Panc1 (cell line): ENCODE measurements at regions of chr12 and their contacts with region 1.

Region 1: DNA sequence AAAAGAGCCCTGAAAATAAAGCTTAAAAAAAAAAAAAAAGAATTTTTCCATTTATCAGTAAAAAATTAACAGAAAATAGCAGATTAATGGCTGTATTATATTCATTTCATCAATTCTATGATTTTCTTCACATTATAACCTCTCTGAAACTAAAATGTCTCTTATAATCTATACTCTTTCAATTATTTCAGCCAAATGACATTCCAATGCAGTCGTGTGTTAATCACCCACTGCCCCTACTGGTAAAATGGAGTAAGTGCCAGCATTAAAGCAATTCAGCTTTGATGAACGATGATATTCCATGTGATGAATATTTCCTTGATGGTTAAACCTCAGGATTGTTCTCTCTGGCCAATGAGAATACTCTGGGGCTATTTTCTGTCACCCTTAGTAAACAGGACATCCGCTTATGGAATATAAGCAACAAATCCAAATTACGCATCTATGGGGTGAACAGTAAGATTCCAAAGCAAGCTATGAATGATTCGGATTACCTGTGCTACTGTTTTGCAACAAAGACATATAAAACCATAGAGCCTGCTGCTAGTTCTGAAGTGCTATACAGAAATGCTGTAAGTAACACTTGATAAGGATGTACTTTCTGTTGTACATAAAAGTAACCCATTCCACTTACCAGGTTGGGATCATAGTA is 20.3 kb upstream of the SYCP3 start:
- DNase-seq: no peak
- ATAC-seq: peak; percentile 79
- H3K4me3 ChIP-seq: no peak overlapping the region
- H3K27ac ChIP-seq: no peak overlapping the region
- H3K4me1 ChIP-seq: no peaks in the 10 kb centered on the region
- H3K27me3 ChIP-seq: no peaks in the 10 kb centered on the region
- CTCF ChIP-seq: peak; percentile 84

Region 2: GRCh38 chr12:101414533-101415119 is 344.9 kb before region 1 on chr12:
- CTCF ChIA-PET with region 1: no interaction called
- POLR2A ChIA-PET with region 1: no interaction called
- in situ Hi-C with region 1: no loop called
- intact Hi-C with region 1: loop called (anchors 5 kb)
- DNase-seq: peak; percentile 68
- ATAC-seq: peak; percentile 82
- H3K4me3 ChIP-seq: no peak overlapping the region
- H3K27ac ChIP-seq: no peak overlapping the region
- H3K4me1 ChIP-seq: no peaks in the 10 kb centered on the region
- H3K27me3 ChIP-seq: no peaks in the 10 kb centered on the region; the same call in 1 of the 2 replicates
- CTCF ChIP-seq: peak; percentile 61; the same call in 1 of the 2 replicates

Region 3: DNA sequence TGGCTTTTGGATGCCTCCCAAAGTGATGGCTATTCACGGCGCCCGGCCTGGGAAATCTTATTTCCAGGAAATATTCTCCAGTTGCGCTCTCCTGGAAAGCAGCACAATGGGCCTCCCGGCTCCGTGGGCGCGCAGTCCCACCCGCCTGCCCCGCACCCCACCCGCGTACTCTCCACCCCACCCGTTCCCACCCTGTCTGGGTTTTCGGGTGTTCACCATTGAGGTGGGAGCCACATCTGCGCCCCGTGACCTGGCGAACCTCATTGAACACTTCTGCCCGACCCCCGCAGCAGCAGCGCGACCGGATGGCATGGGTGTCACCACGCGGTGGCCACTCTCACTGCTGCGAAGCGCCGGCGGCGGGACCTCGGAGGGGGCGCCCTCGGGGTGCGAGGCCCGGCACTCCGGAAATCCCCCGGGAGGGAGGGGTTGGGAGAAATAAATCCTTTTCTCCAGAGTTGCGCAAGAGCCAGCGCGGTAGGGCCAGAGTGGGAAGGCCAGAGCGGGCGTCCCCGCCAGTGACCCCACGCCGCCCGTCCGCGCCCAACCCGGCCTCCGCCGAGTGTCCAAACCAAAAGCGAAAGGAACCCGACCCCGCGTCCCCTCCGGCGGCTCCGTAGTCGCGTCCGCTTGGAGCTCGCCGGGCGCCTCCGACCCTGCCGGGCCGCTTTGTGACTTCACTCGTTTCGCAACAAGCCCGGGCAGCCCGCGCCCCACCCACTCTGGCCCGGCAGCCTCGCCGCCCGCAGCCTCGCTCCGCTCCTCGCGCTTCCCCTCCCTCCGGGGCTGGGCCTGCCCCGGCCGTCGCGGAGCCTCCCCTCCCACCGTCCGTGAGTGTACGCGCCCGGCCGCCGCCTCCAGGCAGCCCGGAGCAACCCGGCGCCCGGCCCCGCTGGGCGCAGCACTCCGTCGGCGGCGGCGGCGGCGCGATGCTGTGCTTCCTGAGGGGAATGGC is 117.6 kb after region 1 on chr12 and contains the start of gene DRAM1:
- CTCF ChIA-PET with region 1: no interaction called
- POLR2A ChIA-PET with region 1: interaction called, 14 read pairs
- in situ Hi-C with region 1: no loop called
- intact Hi-C with region 1: no loop called
- DNase-seq: no peak
- ATAC-seq: peak; percentile 96
- H3K4me3 ChIP-seq: peak within 1 kb of the TSS; percentile 79 to 93
- H3K27ac ChIP-seq: peak within 1 kb of the TSS; percentile 80
- H3K4me1 ChIP-seq: no peaks in the 10 kb centered on the region
- H3K27me3 ChIP-seq: no peaks in the 10 kb centered on the region
- CTCF ChIP-seq: no peak
- total RNA-seq, gene DRAM1: 19.2 TPM

Region 4: DNA sequence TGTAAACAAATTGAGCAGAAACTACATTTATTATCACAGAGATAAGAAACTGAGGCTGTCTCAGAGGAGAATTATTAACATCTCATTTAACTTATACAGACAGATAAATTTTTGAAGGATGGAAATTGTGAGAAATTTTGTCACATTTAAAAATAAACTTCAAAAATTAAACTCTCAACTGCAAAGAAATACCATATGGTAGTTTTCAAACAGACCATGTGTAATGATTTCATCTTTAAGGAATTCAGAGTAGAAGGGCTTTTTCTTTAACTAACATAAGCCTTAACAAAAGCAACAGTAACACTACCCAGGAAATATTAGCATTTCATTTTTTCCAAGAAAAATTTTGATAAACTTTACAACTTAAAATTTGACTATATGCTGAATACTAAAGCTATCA is 333.8 kb after region 1 on chr12:
- CTCF ChIA-PET with region 1: no interaction called
- POLR2A ChIA-PET with region 1: no interaction called
- in situ Hi-C with region 1: no loop called
- intact Hi-C with region 1: no loop called
- DNase-seq: no peak
- ATAC-seq: no peak
- H3K4me3 ChIP-seq: no peak overlapping the region
- H3K27ac ChIP-seq: no peak overlapping the region
- H3K4me1 ChIP-seq: no peaks in the 10 kb centered on the region
- H3K27me3 ChIP-seq: no peaks in the 10 kb centered on the region
- CTCF ChIP-seq: no peak